WTC11 (cell line): ENCODE measurements at regions of chr17 and their contacts with region 1.

Region 1: DNA sequence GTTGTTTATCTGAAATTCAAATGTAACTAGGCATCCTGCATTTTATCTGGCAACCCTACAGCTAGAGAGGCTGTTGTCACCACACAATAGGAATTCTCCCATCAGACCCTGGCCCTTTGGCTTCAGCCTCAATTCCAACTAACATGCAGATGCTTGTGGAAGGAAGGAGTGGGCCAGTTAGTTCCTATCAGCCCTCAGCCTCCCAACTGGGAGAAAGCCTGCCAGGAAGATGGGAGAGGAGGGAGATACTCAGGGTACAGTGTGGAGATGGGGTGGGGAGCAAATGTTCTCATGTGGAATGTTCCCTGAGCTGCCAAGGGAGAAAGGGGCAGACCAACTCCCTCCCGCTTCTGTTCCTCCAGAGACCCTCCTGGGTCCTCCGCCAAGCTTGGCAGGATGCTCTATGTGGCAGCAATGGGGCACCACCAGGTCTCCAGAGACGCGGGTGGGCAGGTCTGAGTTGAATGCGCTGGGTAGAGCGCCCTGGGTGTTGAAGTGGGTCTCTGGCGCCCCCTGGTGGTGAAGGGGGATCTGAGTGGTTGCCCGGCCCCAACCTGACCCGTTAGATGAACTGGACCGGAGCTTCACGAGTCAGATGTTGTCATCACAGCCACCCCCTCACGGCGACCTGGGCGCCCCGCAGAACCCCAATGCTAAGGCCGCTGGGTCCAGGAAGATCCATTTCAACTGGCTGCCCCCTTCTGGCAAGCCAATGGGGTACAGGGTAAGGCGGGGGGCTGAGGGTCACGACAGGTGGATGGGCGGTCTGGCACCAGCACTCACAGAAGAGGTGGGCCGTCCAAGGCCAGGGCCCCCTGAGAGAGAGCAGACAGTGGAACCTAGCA is 15.2 kb downstream of the GALK1 start:
- DNase-seq: peak; percentile 91
- ATAC-seq: peak; percentile 67
- H3K4me3 Mint-ChIP-seq: no peak overlapping the region
- H3K27ac Mint-ChIP-seq: no peak overlapping the region
- H3K4me1 Mint-ChIP-seq: peaks cover 4% of the 10 kb centered on the region
- H3K27me3 Mint-ChIP-seq: peaks cover 7% of the 10 kb centered on the region
- CTCF ChIP-seq: peak; percentile 98

Region 2: GRCh38 chr17:75515496-75516254 is 234.1 kb before region 1 on chr17 and contains the start of gene CASKIN2:
- CTCF ChIA-PET with region 1: interaction called, 15 read pairs
- POLR2A ChIA-PET with region 1: no interaction called
- DNase-seq: peak; percentile 98
- ATAC-seq: peak; percentile 76
- H3K4me3 Mint-ChIP-seq: peak within 1 kb of the TSS; percentile 80
- H3K27ac Mint-ChIP-seq: no peak within 1 kb of the TSS
- H3K4me1 Mint-ChIP-seq: peaks cover 20% of the 10 kb centered on the region
- H3K27me3 Mint-ChIP-seq: no peaks in the 10 kb centered on the region
- CTCF ChIP-seq: peak; percentile 90
- total RNA-seq, gene CASKIN2: 31.3 to 32.2 TPM (median 31.9 TPM) in 3 replicates

Region 3: DNA sequence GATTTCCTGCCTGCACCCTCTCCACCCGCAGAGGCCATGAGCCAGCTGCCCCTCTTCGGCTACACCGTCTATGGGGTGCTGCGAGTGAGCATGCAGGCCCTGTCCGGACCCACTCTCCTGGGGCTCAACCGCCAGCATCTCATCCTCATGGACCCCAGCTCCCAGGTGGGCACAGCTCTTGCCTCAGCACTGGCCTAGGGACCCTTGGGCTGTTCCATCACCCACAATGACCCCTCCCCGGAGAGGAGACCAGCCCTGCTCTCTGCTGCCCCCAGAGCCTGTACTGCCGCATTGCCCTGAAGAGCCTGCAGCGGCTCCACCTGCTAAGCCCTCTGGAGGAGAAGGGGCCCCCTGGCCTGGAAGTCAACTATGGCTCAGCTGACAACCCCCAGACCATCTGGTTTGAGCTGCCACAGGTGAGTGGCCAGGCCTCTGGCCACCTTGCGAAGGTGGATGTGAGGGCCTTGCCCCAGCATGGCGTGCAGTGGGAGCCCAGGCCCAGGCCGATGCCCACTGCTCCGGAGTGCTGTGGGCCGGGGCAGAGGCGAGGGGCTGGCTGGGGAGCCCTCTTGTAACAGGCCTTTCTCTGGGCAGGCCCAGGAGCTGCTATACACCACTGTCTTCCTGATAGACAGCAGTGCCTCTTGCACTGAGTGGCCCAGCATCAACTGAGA is 123.8 kb before region 1 on chr17:
- CTCF ChIA-PET with region 1: interaction called, 93 read pairs
- POLR2A ChIA-PET with region 1: interaction called, 3 read pairs
- DNase-seq: peak; percentile 87
- ATAC-seq: peak; percentile 93
- H3K4me3 Mint-ChIP-seq: no peak overlapping the region
- H3K27ac Mint-ChIP-seq: no peak overlapping the region
- H3K4me1 Mint-ChIP-seq: no peaks in the 10 kb centered on the region
- H3K27me3 Mint-ChIP-seq: no peaks in the 10 kb centered on the region
- CTCF ChIP-seq: peak; percentile 90

Region 4: DNA sequence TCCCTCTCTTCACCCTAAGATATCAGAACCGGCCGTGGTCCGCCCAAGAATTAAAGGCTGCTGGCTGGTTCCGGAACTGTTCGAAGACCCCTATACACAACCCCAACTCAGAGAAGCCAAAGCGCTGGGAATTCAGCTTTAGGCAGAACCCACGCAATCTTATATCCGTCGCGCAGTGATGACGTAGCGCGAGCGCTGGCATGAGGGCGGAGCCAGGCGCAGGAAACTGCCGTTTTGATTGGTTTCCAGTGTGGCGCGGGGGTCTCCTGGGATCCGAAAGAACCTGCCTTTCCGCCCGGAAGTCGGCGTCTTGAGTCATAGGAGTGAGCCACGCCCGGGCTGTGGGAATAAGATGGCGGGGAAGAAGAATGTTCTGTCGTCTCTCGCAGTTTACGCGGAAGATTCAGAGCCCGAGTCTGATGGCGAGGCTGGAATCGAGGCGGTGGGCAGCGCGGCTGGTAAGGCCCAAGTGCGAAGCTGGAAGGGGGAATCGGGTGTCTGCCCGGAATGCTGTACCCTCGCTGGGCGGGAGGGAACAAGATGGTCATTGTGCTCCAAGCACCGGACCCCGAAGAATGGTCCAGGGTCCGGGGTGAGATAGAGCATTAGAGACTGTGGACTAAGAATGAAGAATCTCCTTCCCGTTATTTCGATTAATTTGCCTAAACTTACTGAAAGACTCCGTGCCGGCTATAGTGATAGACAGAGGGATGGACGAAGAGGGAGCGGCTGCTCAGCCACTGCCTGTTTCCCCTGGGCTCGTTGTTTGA is 82.6 kb before region 1 on chr17 and contains the starts of genes RECQL5 and SAP30BP:
- CTCF ChIA-PET with region 1: interaction called, 72 read pairs
- POLR2A ChIA-PET with region 1: interaction called, 3 read pairs
- DNase-seq: peak; percentile 96
- ATAC-seq: peak; percentile 100
- H3K4me3 Mint-ChIP-seq: no peak within 1 kb of the TSS
- H3K27ac Mint-ChIP-seq: peak within 1 kb of the TSS; percentile 65; the same call in 1 of the 2 replicates
- H3K4me1 Mint-ChIP-seq: peaks cover 12% of the 10 kb centered on the region
- H3K27me3 Mint-ChIP-seq: no peaks in the 10 kb centered on the region
- CTCF ChIP-seq: no peak
- total RNA-seq, gene RECQL5: 48.9 to 53.1 TPM (median 51.0 TPM) in 3 replicates
- total RNA-seq, gene SAP30BP: 67.5 to 86.8 TPM (median 72.0 TPM) in 3 replicates

Region 5: DNA sequence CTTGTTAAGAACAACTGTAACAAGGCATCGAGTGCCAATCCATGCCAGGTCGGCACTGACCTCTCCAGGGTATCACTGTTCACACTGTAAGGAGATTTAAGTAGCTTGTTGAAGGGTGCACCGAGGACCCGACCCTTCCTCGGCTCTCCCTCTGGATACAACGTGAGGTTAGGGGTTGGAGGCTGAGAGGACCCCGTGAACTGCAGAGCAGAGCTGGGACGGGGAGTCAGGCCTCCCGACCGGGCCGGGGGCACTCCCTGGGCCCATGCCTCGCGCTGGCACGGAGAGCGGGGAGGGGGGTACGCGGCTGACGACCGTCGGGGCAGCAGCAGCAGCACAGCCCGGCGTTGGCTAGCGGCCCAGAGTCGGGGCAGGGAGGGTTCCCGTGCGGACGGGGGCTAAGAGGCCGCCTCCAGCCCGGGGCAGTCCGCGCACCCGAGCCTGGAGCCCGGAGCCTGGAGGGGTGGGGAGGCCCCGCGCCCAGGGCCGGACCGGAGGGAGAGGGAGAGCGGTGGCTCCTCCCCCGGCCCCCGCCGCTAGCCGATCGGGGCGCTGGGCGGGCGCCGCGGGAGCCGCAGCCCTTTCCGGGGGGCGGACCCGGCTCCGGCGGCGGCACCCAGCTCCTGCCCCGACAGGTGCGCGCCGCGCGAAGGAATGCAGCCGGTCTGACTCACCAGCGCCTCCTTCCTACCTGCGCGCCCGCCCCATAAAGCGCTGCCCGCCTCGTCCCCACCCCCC is 28.9 kb before region 1 on chr17 and contains the start of gene ITGB4:
- CTCF ChIA-PET with region 1: interaction called, 105 read pairs
- POLR2A ChIA-PET with region 1: interaction called, 3 read pairs
- DNase-seq: peak; percentile 87
- ATAC-seq: peak; percentile 84
- H3K4me3 Mint-ChIP-seq: peak within 1 kb of the TSS; percentile 83
- H3K27ac Mint-ChIP-seq: peak within 1 kb of the TSS; percentile 94
- H3K4me1 Mint-ChIP-seq: peaks cover 7% of the 10 kb centered on the region
- H3K27me3 Mint-ChIP-seq: peaks cover 22% of the 10 kb centered on the region
- CTCF ChIP-seq: no peak
- total RNA-seq, gene ITGB4: 9.5 to 11.2 TPM (median 10.6 TPM) in 3 replicates

Region 6: DNA sequence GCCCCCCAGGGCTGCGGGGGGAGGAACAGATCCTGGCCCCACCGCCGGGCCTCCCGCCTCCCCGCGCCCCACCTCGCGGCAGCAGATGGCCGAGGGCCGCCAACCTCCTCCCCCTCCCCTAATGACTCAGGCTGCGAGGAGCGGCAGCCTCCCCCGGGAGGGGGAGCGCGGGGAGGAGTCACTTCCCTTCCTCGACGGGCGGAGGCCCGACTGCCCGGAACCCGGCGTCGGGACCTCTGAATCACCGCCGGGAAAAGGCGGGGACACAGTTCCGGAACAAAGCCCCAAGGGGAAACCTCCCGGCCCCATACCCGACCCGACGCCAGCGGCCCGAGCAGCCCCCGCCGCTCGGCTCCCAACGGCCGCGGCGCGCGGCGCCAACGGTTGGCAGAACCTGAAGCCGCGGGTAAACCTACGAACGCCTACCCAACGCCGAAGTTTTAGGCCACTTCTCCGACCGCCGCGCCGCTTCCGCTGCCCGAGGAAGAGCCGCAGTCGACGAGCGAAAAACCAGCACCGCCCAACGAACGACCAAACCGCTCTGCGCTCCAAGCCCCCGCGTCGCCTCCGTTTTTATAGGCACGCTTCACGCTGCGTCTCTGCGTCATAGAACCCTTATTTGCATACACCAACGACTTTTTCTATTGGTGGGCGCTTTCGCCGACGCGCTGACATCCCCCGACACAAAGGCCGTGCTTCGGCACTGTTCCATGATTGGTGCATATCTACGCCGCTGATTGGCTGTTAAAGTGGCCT is 29.6 kb after region 1 on chr17:
- CTCF ChIA-PET with region 1: interaction called, 72 read pairs
- POLR2A ChIA-PET with region 1: interaction called, 7 read pairs
- DNase-seq: peak; percentile 94
- ATAC-seq: peak; percentile 85
- H3K4me3 Mint-ChIP-seq: peak overlapping the region; percentile 94
- H3K27ac Mint-ChIP-seq: peak overlapping the region; percentile 99
- H3K4me1 Mint-ChIP-seq: peaks cover 46% of the 10 kb centered on the region
- H3K27me3 Mint-ChIP-seq: peaks cover 4% of the 10 kb centered on the region
- CTCF ChIP-seq: 0 out of 2 replicates have a peak, but pooled peaks have one; percentile 11

Region 7: DNA sequence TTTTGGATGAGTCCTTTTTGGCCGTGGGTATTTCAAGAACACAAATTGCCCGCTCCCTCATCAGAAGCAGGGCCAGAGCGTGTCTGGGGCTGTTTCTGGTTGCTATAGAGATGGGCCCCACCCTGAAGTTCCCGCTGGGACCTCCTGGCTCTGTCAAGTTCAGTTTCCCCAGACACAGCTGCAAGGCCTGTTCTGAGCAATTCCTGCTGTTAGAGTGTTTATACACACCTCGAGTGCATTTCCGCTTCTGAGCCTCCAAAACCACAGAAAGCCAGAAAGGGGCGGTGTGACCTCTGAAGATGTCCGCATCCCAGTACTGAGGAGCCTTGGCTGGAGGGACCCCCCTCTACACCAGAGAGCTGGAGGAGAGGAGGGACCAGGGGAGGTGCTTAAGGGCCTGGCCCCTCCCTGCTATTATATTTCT is 114.7 kb after region 1 on chr17:
- CTCF ChIA-PET with region 1: interaction called, 17 read pairs
- POLR2A ChIA-PET with region 1: no interaction called
- DNase-seq: no peak
- ATAC-seq: peak; percentile 92
- H3K4me3 Mint-ChIP-seq: no peak overlapping the region
- H3K27ac Mint-ChIP-seq: peak overlapping the region; percentile 41; the same call in 1 of the 2 replicates
- H3K4me1 Mint-ChIP-seq: peaks cover 18% of the 10 kb centered on the region
- H3K27me3 Mint-ChIP-seq: peaks cover 2% of the 10 kb centered on the region; the same call in 1 of the 2 replicates
- CTCF ChIP-seq: no peak

Region 8: GRCh38 chr17:75950821-75951554 is 201.2 kb after region 1 on chr17:
- CTCF ChIA-PET with region 1: no interaction called
- POLR2A ChIA-PET with region 1: no interaction called
- DNase-seq: no peak
- ATAC-seq: no peak
- H3K4me3 Mint-ChIP-seq: no peak overlapping the region
- H3K27ac Mint-ChIP-seq: no peak overlapping the region
- H3K4me1 Mint-ChIP-seq: peaks cover 10% of the 10 kb centered on the region
- H3K27me3 Mint-ChIP-seq: no peaks in the 10 kb centered on the region
- CTCF ChIP-seq: no peak